HepG2 (cell line): ENCODE measurements at regions of chr21 and their contacts with region 1.

Region 1: GRCh38 chr21:17819114-17819876 is at the start of gene C21orf91:
- DNase-seq: peak; percentile 56
- ATAC-seq: peak; percentile 96
- H3K4me3 ChIP-seq: peak within 1 kb of the TSS; percentile 89 to 96 (median 93)
- H3K27ac ChIP-seq: peak within 1 kb of the TSS; percentile 90
- H3K4me1 ChIP-seq: peaks cover 22% of the 10 kb centered on the region
- H3K27me3 ChIP-seq: no peaks in the 10 kb centered on the region; a peak in 1 of 5 replicates
- CTCF ChIP-seq: no peak
- EP300 ChIP-seq: no peak
- POLR2A ChIP-seq: peak; percentile 84 to 92
- RAD21 ChIP-seq: no peak
- total RNA-seq, gene C21orf91: 7.8 and 13.0 TPM in 2 replicates

Region 2: DNA sequence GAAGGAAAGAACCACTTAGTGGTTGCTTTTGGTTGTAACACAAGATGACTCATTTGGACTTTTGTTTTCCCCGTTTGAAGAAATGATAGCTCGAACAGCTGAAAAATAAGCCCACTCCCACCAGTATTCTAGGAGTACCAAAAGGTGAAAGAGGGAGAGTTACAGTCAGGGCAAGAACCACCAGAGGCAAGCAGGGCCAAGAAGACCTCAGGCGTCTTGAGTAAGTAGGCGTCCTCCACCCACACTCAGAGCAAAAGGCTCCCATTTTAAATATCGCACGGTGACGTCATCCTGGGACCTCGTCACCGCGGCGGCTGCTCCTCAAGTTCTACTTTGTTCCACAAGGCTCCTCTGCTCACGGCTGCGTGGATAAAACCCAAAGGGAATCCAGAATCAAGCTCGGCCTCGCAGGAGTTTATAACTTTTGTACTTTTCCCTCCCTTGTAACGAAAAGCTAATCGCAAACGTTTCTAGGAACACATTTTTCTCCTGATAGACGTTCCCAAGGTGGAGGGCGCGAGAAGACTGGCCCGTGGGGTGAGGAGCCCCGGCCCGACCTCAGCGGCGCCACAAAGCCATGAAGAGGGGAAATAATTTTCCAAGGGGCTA is 207.8 kb before region 1 on chr21:
- CTCF ChIA-PET with region 1: no interaction called
- POLR2A ChIA-PET with region 1: no interaction called
- in situ Hi-C with region 1: no loop called
- intact Hi-C with region 1: loop called (anchors 10 kb)
- DNase-seq: peak; percentile 55
- ATAC-seq: peak; percentile 30
- H3K4me3 ChIP-seq: peak overlapping the region; percentile 82 to 90 (median 85)
- H3K27ac ChIP-seq: peak overlapping the region; percentile 73
- H3K4me1 ChIP-seq: peaks cover 44% of the 10 kb centered on the region
- H3K27me3 ChIP-seq: no peaks in the 10 kb centered on the region; a peak in 1 of 5 replicates
- CTCF ChIP-seq: no peak
- EP300 ChIP-seq: no peak
- POLR2A ChIP-seq: peak in 1 of 2 experiments; percentile 49; a peak in 1 of 4 replicates
- RAD21 ChIP-seq: no peak

Region 3: DNA sequence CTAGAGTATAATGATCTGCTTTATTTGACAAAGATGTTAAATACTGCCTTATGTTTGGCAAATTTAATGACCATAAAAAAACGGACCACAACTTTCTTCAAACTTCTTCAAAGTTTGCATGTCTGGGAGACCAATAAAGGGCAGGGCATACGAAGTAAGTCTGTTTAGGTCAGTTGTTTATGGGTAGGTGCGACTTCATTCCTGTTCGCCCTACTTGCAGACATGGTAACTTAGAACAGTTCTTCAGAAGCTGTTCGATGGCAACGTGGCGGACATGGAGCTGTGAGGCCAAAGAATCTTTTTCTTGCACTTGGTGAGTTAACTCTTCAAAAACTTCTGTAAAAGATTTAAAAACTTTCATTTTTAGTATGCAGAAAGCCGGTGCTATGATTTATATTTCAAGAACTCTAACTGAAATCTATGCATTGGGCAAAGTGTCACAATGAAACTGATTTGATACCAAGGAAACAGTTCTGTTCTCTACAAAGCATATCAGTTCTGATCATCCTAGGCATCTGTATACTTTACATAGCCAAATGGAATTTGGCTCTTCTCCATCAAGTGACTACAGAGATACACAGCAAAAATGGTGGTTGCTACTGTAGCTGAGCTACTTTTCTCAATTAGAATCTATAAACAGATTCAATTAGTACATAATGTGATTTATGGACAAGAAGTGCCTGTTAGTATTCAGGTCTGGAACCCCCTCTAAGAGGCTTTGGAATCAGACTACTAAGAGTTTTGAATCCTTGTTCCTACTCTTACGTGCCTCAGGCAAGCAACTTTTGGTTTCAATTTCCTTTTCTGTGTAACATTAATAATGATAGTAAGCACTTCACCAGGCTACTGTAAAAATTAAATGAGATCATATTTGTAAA is 25.8 kb before region 1 on chr21:
- CTCF ChIA-PET with region 1: no interaction called
- POLR2A ChIA-PET with region 1: interaction called, 3 read pairs
- in situ Hi-C with region 1: no loop called
- intact Hi-C with region 1: loop called (anchors 2 kb)
- DNase-seq: no peak
- ATAC-seq: no peak
- H3K4me3 ChIP-seq: no peak overlapping the region
- H3K27ac ChIP-seq: no peak overlapping the region
- H3K4me1 ChIP-seq: peaks cover 19% of the 10 kb centered on the region
- H3K27me3 ChIP-seq: no peaks in the 10 kb centered on the region
- CTCF ChIP-seq: no peak
- EP300 ChIP-seq: no peak
- POLR2A ChIP-seq: no peak
- RAD21 ChIP-seq: no peak

Region 4: DNA sequence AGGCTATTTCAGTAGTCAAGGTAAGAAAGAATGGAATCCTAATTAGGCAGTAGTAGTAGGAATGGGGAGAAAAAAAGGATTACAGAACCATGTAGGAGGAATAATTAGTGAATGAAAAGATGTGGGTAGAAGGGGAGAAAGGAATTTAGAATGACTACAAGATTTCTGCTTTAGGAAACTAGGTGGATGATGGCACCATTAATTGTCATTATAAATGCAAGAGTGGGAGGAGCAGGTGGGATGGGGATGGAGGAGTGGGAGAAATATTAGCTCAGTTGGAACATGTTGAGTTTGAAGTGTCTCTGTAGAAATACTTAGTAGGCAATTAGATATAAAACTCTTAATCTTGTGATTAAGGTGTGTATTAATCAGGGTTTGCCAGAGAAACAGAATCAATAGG is 49.8 kb after region 1 on chr21:
- CTCF ChIA-PET with region 1: no interaction called
- POLR2A ChIA-PET with region 1: no interaction called
- in situ Hi-C with region 1: no loop called
- intact Hi-C with region 1: no loop called
- DNase-seq: no peak
- ATAC-seq: no peak
- H3K4me3 ChIP-seq: no peak overlapping the region
- H3K27ac ChIP-seq: no peak overlapping the region
- H3K4me1 ChIP-seq: no peaks in the 10 kb centered on the region
- H3K27me3 ChIP-seq: no peaks in the 10 kb centered on the region
- CTCF ChIP-seq: no peak
- EP300 ChIP-seq: no peak
- POLR2A ChIP-seq: no peak
- RAD21 ChIP-seq: no peak

Region 5: GRCh38 chr21:19256934-19257660 is 1437.8 kb after region 1 on chr21:
- CTCF ChIA-PET with region 1: no interaction called
- POLR2A ChIA-PET with region 1: no interaction called
- in situ Hi-C with region 1: no loop called
- intact Hi-C with region 1: no loop called
- DNase-seq: no peak
- ATAC-seq: no peak
- H3K4me3 ChIP-seq: no peak overlapping the region
- H3K27ac ChIP-seq: no peak overlapping the region
- H3K4me1 ChIP-seq: no peaks in the 10 kb centered on the region
- H3K27me3 ChIP-seq: no peaks in the 10 kb centered on the region; a peak in 1 of 5 replicates
- CTCF ChIP-seq: no peak
- EP300 ChIP-seq: no peak
- POLR2A ChIP-seq: no peak
- RAD21 ChIP-seq: no peak